Activated CD8-positive, alpha-beta T cell treated with anti-CD3 and anti-CD28 coated beads for 36 hours (primary cell): ENCODE measurements at regions of chr14 and their contacts with region 1.

Region 1: DNA sequence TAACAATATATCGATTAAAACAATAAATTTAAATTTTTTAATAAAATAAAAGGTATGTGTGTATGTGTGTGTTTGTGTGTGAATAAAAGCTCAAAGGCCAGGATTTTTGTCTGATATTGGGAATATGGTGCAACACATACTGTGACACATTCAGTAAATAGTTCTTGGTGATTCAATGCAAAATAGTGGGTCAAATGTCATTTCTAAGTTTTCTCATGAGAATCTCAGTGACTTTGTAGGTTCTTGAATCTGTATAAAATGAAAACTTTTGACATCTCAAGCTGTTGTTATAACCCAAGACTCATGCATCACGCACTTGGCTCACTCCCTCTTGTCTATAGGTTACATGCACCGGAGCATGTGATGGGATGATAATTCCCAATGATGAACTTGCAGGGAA is 16.2 kb upstream of the MED6 start:
- DNase-seq: no peak
- ATAC-seq: no peak
- H3K4me3 Mint-ChIP-seq: no peak overlapping the region
- H3K27ac Mint-ChIP-seq: no peak overlapping the region
- H3K4me1 Mint-ChIP-seq: no peaks in the 10 kb centered on the region
- H3K27me3 Mint-ChIP-seq: no peaks in the 10 kb centered on the region
- CTCF ChIP-seq: no peak

Region 2: GRCh38 chr14:70809543-70810244 is 193.0 kb after region 1 on chr14:
- CTCF ChIA-PET with region 1: no interaction called
- POLR2A ChIA-PET with region 1: interaction called, 3 read pairs
- intact Hi-C with region 1: loop called (anchors 10 kb)
- DNase-seq: peak; percentile 97
- ATAC-seq: peak; percentile 88
- H3K4me3 Mint-ChIP-seq: no peak overlapping the region
- H3K27ac Mint-ChIP-seq: peak overlapping the region; percentile 87
- H3K4me1 Mint-ChIP-seq: peaks cover 14% of the 10 kb centered on the region
- H3K27me3 Mint-ChIP-seq: no peaks in the 10 kb centered on the region
- CTCF ChIP-seq: no peak

Region 3: GRCh38 chr14:72366619-72367018 is 1750.0 kb after region 1 on chr14:
- CTCF ChIA-PET with region 1: no interaction called
- POLR2A ChIA-PET with region 1: no interaction called
- intact Hi-C with region 1: no loop called
- DNase-seq: no peak
- ATAC-seq: no peak
- H3K4me3 Mint-ChIP-seq: no peak overlapping the region
- H3K27ac Mint-ChIP-seq: no peak overlapping the region
- H3K4me1 Mint-ChIP-seq: no peaks in the 10 kb centered on the region
- H3K27me3 Mint-ChIP-seq: peaks cover 1% of the 10 kb centered on the region
- CTCF ChIP-seq: no peak